Breast epithelium (tissue), 4 donors: ENCODE measurements at regions of chr18 and their contacts with region 1.

Region 1: GRCh38 chr18:6249788-6250187 is 164.9 kb downstream of the L3MBTL4 start:
- DNase-seq: no peak
- H3K4me3 ChIP-seq: no peak overlapping the region
- H3K27ac ChIP-seq: no peak overlapping the region
- H3K4me1 ChIP-seq: no peaks in the 10 kb centered on the region
- H3K27me3 ChIP-seq: no peaks in the 10 kb centered on the region
- CTCF ChIP-seq: no peak
- POLR2A ChIP-seq: no peak

Region 2: GRCh38 chr18:6150430-6150829 is 99.4 kb before region 1 on chr18:
- intact Hi-C with region 1: loop called (anchors 5 kb)
- DNase-seq: no peak
- H3K4me3 ChIP-seq: no peak overlapping the region
- H3K27ac ChIP-seq: no peak overlapping the region
- H3K4me1 ChIP-seq: no peaks in the 10 kb centered on the region
- H3K27me3 ChIP-seq: no peaks in the 10 kb centered on the region
- CTCF ChIP-seq: no peak
- POLR2A ChIP-seq: no peak

Region 3: GRCh38 chr18:6683112-6683876 is 433.5 kb after region 1 on chr18:
- intact Hi-C with region 1: no loop called
- DNase-seq: no peak
- H3K4me3 ChIP-seq: no peak overlapping the region
- H3K27ac ChIP-seq: no peak overlapping the region
- H3K4me1 ChIP-seq: no peaks in the 10 kb centered on the region
- H3K27me3 ChIP-seq: no peaks in the 10 kb centered on the region
- CTCF ChIP-seq: no peak
- POLR2A ChIP-seq: no peak